CD4-positive, alpha-beta T cell (primary cell): ENCODE measurements at regions of chr4 and their contacts with region 1.

Region 1: DNA sequence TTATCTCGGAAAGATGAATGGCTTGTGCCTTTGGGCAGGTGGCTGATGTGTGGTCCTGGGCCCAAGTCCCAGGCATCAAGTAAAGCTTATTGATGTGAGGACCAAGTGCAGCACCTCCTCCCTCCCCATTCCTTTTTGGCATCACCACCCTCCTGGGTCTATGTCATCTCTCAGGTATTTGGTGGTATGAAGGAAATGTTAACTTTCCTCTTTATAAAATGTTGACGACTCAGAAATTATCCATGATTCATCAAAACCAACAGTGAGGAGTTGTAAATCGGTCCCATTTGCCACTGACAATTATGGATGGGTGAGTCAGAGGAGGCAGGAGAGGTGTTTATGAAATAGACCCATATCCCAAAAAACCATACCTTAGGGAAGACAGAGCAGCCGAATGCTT is 229.4 kb upstream of the GATB start:
- DNase-seq: no peak
- ATAC-seq: no peak
- H3K4me3 ChIP-seq: no peak overlapping the region
- H3K4me3 Mint-ChIP-seq: no peak overlapping the region
- H3K27ac ChIP-seq: peak overlapping the region in 1 of 2 donors; percentile 42
- H3K27ac Mint-ChIP-seq: peak overlapping the region; percentile 91
- H3K4me1 ChIP-seq: peaks cover 52% of the 10 kb centered on the region
- H3K4me1 Mint-ChIP-seq: peaks cover 66% of the 10 kb centered on the region
- H3K27me3 ChIP-seq: no peaks in the 10 kb centered on the region
- H3K27me3 Mint-ChIP-seq: no peaks in the 10 kb centered on the region
- CTCF ChIP-seq: no peak

Region 2: DNA sequence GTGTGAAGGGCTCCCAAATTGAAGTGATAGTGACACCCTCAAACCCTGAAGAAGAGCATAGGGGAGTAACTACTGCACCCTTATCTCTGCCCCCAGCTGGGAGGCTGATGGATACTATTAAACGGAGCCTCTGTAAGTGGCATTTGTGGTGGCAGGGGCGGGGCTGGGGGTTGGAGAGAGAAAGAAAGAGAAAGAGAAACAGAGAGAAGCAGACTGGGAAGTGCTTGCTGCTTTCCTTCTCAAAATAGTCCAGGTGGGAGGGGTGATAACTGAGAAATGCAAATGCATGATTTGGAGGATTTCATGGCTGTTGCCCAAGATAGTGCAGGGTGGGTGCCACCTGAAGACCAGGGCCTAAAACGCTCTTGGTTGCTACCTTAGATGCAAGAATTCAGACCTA is 24.1 kb after region 1 on chr4:
- CTCF ChIA-PET with region 1: no interaction called
- POLR2A ChIA-PET with region 1: interaction called, 10 read pairs
- intact Hi-C with region 1: no loop called
- DNase-seq: peak in 11 of 14 experiments; percentile 13 to 73 (median 35)
- ATAC-seq: peak; percentile 26
- H3K4me3 ChIP-seq: no peak overlapping the region
- H3K4me3 Mint-ChIP-seq: no peak overlapping the region
- H3K27ac ChIP-seq: peak overlapping the region in 1 of 2 donors; percentile 17
- H3K27ac Mint-ChIP-seq: peak overlapping the region; percentile 74
- H3K4me1 ChIP-seq: peaks cover 51% of the 10 kb centered on the region
- H3K4me1 Mint-ChIP-seq: peaks cover 64% of the 10 kb centered on the region
- H3K27me3 ChIP-seq: no peaks in the 10 kb centered on the region
- H3K27me3 Mint-ChIP-seq: no peaks in the 10 kb centered on the region
- CTCF ChIP-seq: no peak